T-cell (primary cell): ENCODE measurements at regions of chr3 and their contacts with region 1.

Region 1: DNA sequence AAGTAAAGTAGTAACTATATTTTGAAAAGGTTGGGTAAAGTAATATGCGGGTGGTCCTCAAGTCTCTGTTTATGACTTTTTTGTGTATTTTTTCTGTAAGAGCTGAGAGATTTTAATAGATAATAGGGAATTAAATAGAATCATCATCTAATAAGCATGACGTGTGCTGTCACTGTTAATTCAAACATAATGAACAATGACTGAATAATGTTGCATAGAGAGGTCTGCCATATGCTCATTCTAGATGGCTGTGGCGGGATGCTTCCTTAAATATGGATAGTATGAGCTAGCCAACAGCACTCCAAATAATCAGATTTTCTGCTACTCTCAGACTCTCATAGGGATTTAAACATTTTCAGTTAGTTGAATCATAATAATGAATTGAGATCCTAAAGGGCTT is 302.8 kb upstream of the RBMS3 start:
- DNase-seq: no peak
- ATAC-seq: no peak
- H3K4me3 ChIP-seq: no peak overlapping the region
- H3K4me3 Mint-ChIP-seq: no peak overlapping the region
- H3K27ac ChIP-seq: no peak overlapping the region
- H3K27ac Mint-ChIP-seq: no peak overlapping the region
- H3K4me1 ChIP-seq: no peaks in the 10 kb centered on the region
- H3K4me1 Mint-ChIP-seq: no peaks in the 10 kb centered on the region
- H3K27me3 ChIP-seq: no peaks in the 10 kb centered on the region
- H3K27me3 Mint-ChIP-seq: no peaks in the 10 kb centered on the region

Region 2: DNA sequence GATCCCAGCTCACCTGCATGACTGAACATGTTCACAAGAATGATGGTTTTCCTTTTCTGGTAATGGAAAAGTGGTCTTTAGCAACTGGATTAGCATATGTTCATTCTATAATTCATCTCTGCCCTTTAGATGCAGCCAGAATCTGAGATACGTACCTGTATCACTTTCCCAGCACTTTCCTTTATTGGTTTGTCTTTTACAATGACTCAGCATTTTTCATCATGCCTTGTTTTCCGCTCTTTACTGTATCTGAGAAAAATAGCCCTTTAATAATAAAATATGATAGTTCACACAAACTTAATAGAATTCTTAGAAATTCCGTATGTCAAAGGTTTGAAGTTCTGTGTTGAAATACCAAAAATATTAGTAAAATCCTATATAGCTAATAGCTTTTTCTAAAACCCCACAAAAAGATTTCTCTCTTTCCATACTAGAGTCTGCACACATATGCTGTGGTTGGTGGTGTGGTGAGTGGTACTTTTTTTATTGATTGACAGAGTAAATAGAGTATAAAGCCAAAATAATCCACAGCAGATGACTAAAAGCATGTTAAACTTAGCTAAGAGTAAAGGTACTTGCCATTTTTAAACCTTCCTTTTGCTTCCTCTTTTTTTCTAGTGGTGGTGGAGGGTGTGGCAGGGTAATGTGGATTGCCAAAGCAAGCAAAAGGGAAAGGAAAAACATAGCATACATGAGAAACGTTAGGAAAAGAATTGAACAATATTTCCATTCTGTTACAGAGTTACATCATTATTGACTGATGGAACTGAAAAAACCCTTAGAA is 26.1 kb before region 1 on chr3:
- CTCF ChIA-PET with region 1: no interaction called
- POLR2A ChIA-PET with region 1: no interaction called
- DNase-seq: no peak
- ATAC-seq: no peak
- H3K4me3 ChIP-seq: no peak overlapping the region
- H3K4me3 Mint-ChIP-seq: no peak overlapping the region
- H3K27ac ChIP-seq: no peak overlapping the region
- H3K27ac Mint-ChIP-seq: no peak overlapping the region
- H3K4me1 ChIP-seq: no peaks in the 10 kb centered on the region
- H3K4me1 Mint-ChIP-seq: no peaks in the 10 kb centered on the region
- H3K27me3 ChIP-seq: no peaks in the 10 kb centered on the region
- H3K27me3 Mint-ChIP-seq: no peaks in the 10 kb centered on the region

Region 3: DNA sequence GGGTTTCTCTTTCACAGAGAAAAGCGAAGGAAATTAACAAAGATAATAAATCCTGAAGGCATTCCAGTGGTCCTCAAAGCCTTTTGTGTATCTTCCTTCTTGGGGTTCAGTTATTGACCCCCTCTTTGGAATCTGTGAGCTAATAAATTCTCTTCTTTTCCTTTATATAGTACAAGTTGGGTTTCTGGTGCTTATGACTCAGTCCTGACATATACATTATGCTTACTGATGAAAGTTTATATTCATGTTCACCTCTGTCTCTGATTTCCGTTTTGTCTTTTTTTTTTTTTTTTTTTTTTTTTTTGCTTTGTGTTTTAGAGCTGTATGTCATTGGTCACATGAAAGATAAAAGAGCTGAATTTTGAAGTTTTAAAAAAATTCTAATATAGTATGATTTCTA is 72.1 kb after region 1 on chr3:
- CTCF ChIA-PET with region 1: no interaction called
- POLR2A ChIA-PET with region 1: interaction called in 1 of 2 experiments, 10 read pairs
- DNase-seq: no peak
- ATAC-seq: no peak
- H3K4me3 ChIP-seq: no peak overlapping the region
- H3K4me3 Mint-ChIP-seq: no peak overlapping the region
- H3K27ac ChIP-seq: no peak overlapping the region
- H3K27ac Mint-ChIP-seq: no peak overlapping the region
- H3K4me1 ChIP-seq: no peaks in the 10 kb centered on the region
- H3K4me1 Mint-ChIP-seq: no peaks in the 10 kb centered on the region
- H3K27me3 ChIP-seq: no peaks in the 10 kb centered on the region
- H3K27me3 Mint-ChIP-seq: peaks cover 0 to 6% of the 10 kb centered on the region in 2 donors